ENCODE measurements at regions of chr16 and their contacts with region 1.

Region 1: DNA sequence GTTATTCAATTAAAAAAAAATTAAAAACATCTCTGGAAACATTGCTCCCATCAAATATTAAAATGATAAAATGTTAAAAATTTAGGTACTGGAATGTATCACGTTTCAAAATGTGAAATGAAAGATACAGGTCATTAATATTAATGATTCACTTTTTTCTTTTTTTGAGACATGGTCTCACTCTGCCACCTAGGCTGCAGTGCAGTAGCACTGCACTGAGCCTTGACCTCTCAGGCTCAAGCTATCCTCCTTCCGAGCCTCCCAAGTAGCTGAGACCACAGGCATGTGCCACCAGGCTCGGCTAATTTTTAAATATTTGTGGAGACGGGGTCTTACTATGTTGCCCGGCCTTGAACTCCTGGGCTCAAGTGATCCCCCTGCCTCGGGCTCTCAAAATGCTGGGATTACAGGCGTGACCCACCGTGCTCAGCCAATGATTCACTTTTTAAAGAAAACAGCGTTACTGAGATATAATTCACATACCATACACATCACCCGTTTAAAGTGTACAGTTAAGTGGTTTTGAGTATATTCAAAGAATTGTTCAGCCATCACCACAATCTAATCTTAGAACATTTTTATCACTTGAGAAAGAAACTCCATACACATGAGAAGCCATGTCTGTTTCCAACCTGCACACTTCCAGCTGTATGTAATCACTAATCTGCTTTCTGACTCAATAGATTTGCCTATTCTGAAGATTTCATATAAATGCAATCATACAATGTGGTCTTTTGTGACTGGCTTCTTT is 19.1 kb upstream of the NETO2 start:
- DNase-seq: peak; percentile 4
- ATAC-seq: no peak
- H3K4me3 ChIP-seq: no peak overlapping the region
- H3K27ac ChIP-seq: no peak overlapping the region
- H3K4me1 ChIP-seq: no peaks in the 10 kb centered on the region
- H3K27me3 ChIP-seq: no peaks in the 10 kb centered on the region
- CTCF ChIP-seq: no peak
- POLR2A ChIP-seq: no peak
- RAD21 ChIP-seq: no peak

Region 2: GRCh38 chr16:47262938-47263337 is 100.1 kb after region 1 on chr16:
- CTCF ChIA-PET with region 1: no interaction called
- POLR2A ChIA-PET with region 1: no interaction called
- dilution Hi-C with region 1: no loop called
- in situ Hi-C with region 1: no loop called
- intact Hi-C with region 1: no loop called
- DNase-seq: peak; percentile 8
- ATAC-seq: peak; percentile 35; the same call in 1 of the 2 replicates
- H3K4me3 ChIP-seq: no peak overlapping the region
- H3K27ac ChIP-seq: no peak overlapping the region
- H3K4me1 ChIP-seq: no peaks in the 10 kb centered on the region
- H3K27me3 ChIP-seq: no peaks in the 10 kb centered on the region
- CTCF ChIP-seq: no peak
- POLR2A ChIP-seq: no peak
- RAD21 ChIP-seq: no peak

Region 3: GRCh38 chr16:47664653-47665325 is 501.9 kb after region 1 on chr16:
- CTCF ChIA-PET with region 1: no interaction called
- POLR2A ChIA-PET with region 1: no interaction called
- dilution Hi-C with region 1: no loop called
- in situ Hi-C with region 1: loop called (anchors 25 kb)
- intact Hi-C with region 1: no loop called
- DNase-seq: peak; percentile 11
- ATAC-seq: 0 out of 2 replicates have a peak, but pooled peaks have one; percentile 21
- H3K4me3 ChIP-seq: no peak overlapping the region
- H3K27ac ChIP-seq: no peak overlapping the region
- H3K4me1 ChIP-seq: peaks cover 5% of the 10 kb centered on the region; the same call in 1 of the 2 replicates
- H3K27me3 ChIP-seq: no peaks in the 10 kb centered on the region
- CTCF ChIP-seq: no peak
- POLR2A ChIP-seq: no peak
- RAD21 ChIP-seq: no peak